ENCODE measurements at regions of chr15 and their contacts with region 1.

Region 1: DNA sequence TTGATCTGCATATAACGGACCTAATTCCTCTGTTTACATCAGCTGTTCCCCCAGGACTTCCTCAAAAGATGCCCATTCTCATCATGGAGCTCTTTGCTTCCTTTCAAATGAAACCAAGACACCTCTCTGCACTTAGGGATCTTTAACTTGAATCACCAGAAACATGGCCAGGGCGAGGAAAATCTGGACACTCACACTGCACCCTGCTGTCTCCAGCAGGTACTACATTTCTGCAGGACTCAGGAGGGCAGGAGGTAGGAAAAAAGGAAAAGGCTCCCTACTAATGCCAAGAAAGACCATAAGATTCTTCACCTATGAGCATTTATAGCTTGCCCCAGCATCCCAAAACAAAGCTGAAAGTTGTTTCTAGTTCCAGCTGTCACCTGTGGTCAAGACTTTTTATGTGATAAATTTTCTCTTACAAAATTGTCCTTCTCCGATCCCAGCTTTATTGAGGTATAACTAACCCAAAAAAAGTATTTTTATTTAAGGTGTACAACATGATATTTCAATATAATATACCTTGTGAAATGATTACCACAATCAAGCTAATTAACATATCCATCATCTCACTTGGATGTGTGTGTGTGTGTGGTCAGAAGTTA is 87.3 kb upstream of the C15orf61 start:
- DNase-seq: peak in 2 of 9 donors; percentile 5 to 6
- ATAC-seq: peak; percentile 55
- H3K4me3 ChIP-seq: no peak overlapping the region
- H3K4me3 Mint-ChIP-seq: no peak overlapping the region
- H3K27ac ChIP-seq: no peak overlapping the region
- H3K27ac Mint-ChIP-seq: no peak overlapping the region
- H3K4me1 ChIP-seq: no peaks in the 10 kb centered on the region
- H3K4me1 Mint-ChIP-seq: no peaks in the 10 kb centered on the region
- H3K27me3 ChIP-seq: no peaks in the 10 kb centered on the region
- H3K27me3 Mint-ChIP-seq: peaks cover 0 to 3% (median 0%) of the 10 kb centered on the region in 5 donors

Region 2: DNA sequence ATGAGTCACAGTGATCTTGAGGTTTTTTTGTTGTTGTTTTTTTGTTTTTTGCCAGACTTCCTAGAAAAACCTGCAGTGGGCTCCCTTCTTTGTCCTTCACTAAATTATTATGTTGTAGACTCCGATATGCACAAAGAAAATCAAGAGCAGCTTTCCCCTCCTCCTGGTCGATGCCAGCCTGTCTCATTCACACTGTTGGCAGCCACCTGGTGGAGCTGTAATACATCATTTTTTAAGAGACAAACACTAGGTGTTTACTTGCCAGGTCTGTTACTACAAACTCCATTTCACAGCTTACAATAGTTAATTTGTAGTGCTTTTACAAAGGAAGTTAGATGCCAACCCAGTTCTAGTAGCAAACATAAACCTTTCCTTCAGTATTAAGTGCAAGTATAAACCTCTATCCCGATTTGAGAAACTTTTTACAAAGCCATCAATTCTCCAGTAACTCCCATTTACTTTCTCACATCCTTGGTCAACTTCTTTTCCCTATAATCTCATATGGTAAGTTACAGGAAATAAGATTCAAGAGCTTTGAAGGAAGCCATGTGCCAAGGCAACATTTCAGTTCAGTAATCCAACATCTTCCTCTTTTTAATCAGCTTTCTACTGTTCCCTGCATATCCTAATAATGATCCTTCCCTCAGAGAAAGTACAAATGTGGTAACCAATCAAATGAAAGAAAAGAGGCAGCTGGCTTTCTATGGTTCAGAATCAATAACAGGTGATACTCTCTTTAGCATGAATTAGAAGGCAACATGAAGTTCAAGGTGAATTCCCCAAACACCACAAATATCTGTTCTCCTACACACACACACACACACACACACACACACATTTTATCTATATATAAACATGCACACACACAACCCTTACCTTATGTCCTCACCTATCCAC is 193.1 kb before region 1 on chr15:
- CTCF ChIA-PET with region 1: interaction called, 4 read pairs
- POLR2A ChIA-PET with region 1: no interaction called
- intact Hi-C with region 1: loop called in 1 of 2 experiments (anchors 2 kb)
- DNase-seq: peak in 3 of 9 donors; percentile 9 to 30 (median 12)
- ATAC-seq: peak; percentile 70
- H3K4me3 ChIP-seq: peak overlapping the region; percentile 23
- H3K4me3 Mint-ChIP-seq: peak overlapping the region in 9 of 10 donors; percentile 18 to 71 (median 45)
- H3K27ac ChIP-seq: no peak overlapping the region
- H3K27ac Mint-ChIP-seq: peak overlapping the region in 8 of 9 donors; percentile 46 to 88 (median 70)
- H3K4me1 ChIP-seq: peaks cover 16 to 34% of the 10 kb centered on the region in 2 donors
- H3K4me1 Mint-ChIP-seq: peaks cover 34 to 67% (median 56%) of the 10 kb centered on the region in 7 donors
- H3K27me3 ChIP-seq: no peaks in the 10 kb centered on the region
- H3K27me3 Mint-ChIP-seq: no peaks in the 10 kb centered on the region